ENCODE measurements at regions of chr1 and their contacts with region 1.

Region 1: DNA sequence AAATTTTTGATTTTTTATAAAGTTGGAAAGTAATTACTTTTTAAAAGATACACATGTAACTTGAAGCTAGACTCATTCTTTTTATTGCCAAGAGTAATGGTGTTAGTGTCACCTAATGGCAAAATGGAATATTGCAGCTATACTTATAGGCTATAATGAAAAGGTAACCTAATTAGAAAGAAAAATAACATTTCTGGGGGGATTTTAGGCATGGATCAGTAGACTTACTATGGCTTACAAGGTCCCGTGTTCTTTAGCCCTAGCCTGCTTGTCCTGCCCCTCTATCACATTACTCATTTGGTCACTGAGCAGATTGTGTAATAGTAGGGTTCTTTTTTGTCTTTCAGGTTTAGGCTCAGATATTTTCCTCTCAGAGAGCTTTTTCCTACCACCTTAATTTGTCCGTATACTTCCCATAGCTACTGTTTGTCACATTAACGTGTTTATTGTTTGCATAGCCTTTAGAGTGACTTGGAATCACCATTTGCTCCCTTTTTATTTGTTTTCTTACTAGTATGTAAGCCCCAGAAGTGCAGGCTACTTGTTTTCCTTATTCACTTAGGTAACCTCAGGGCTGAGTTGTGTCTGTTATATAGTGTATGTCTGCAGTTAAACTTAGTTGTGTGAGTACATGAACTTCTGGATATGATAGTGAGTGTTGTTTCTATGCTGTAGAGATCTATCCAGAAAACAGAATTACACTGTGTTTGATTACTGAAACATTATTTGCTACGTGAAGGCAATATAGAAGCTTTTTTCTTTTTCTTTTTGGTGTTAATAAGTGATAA is 58.7 kb downstream of the RABGAP1L start:
- DNase-seq: no peak
- H3K4me3 ChIP-seq: no peak overlapping the region
- H3K27ac ChIP-seq: peak overlapping the region; percentile 45
- H3K4me1 ChIP-seq: peaks cover 20% of the 10 kb centered on the region
- H3K27me3 ChIP-seq: no peaks in the 10 kb centered on the region
- CTCF ChIP-seq: peak; percentile 81

Region 2: GRCh38 chr1:174097426-174097825 is 120.6 kb before region 1 on chr1:
- intact Hi-C with region 1: loop called (anchors 10 kb)
- DNase-seq: no peak
- H3K4me3 ChIP-seq: no peak overlapping the region
- H3K27ac ChIP-seq: no peak overlapping the region
- H3K4me1 ChIP-seq: no peaks in the 10 kb centered on the region
- H3K27me3 ChIP-seq: no peaks in the 10 kb centered on the region
- CTCF ChIP-seq: no peak

Region 3: GRCh38 chr1:174398246-174398645 is 180.3 kb after region 1 on chr1:
- intact Hi-C with region 1: no loop called
- DNase-seq: no peak
- H3K4me3 ChIP-seq: no peak overlapping the region
- H3K27ac ChIP-seq: no peak overlapping the region
- H3K4me1 ChIP-seq: no peaks in the 10 kb centered on the region
- H3K27me3 ChIP-seq: no peaks in the 10 kb centered on the region
- CTCF ChIP-seq: no peak